Lower leg skin (tissue), 4 donors: ENCODE measurements at regions of chr1 and their contacts with region 1.

Region 1: DNA sequence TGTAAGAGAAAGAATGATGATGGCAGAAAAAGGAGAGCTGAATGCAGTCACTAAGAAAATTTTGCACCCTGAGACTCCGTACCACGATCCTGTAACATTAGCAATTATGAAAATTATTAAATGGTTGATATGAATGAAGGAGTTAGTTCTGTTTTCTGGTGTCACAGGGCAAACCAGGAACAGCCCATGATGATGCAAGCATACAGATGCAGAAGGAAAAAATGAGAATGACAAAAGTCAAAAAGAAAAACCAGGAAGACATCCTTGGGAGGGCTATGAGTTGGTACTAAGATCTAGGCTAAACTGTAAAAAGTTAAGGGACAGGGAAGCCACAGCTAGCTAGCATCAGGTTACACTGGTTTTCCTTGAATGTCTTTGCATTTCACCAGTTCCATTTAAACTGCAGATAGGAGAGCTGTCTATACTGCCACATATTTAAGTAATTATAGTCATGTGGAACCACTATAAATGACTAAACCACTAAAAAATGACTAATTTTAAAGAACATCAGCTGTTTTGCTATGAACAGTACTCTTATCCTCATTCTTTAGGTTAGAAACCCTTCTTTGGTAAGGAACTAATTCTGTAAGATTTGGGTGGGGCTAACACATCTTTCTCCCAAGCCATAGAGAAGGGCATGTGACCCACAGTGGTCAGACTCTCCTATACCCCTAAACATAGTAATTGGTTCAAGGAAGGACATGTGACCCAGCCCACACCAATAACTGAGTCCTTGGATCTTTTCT is 11.4 kb downstream of the DOCK7 start:
- DNase-seq: no peak
- H3K4me3 ChIP-seq: no peak overlapping the region
- CTCF ChIP-seq: no peak
- POLR2A ChIP-seq: no peak

Region 2: GRCh38 chr1:62732331-62732730 is 55.5 kb after region 1 on chr1:
- intact Hi-C with region 1: loop called (anchors 2 kb)
- DNase-seq: no peak
- H3K4me3 ChIP-seq: no peak overlapping the region
- CTCF ChIP-seq: no peak
- POLR2A ChIP-seq: no peak

Region 3: GRCh38 chr1:62953633-62954032 is 276.8 kb after region 1 on chr1:
- intact Hi-C with region 1: no loop called
- DNase-seq: no peak
- H3K4me3 ChIP-seq: no peak overlapping the region
- CTCF ChIP-seq: no peak
- POLR2A ChIP-seq: no peak